Activated naive CD4-positive, alpha-beta T cell treated with anti-CD3 and anti-CD28 coated beads for 36 hours (primary cell): ENCODE measurements at regions of chr14 and their contacts with region 1.

Region 1: DNA sequence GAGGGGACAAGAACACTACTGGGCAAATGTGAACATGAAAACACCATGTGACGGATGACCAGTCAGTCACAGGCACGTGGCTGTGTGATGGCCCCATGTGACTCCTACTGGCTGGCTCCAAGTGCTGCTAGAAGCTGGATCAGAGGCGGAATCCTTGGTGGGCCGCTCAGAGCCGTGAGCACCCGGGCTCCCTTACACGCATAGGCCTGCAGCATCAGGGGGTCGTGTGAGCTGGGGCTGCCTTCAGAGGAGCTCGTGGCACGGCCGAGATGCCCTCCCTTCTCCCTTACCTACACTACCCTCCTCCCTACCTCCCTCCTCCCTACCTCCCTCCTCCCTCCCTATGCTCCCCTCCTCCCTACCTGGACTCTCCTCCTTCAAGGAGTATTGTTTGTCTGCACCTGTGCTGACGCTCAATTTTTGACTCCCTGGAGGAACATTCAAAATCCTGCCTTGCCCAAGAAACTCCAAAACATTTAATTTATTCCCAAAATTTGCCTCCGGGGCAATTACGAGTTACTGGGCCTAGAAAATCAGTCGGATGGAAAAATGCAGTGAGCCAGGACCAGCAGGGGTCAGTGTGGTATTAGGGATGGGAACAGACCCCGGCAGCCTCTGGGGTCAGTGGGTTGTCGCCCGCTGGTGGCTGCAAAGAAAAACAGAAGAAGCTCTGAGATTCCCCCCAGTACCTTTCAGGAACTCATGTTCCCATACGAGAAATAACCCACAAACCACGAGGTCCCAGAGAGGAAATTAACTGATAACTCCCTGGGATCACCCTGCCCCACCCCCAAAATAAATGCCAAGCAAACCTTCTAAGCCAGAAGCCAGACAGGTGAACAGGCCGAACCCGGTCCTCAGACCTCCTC is 61.2 kb downstream of the C14orf132 start:
- DNase-seq: peak; percentile 86
- H3K4me3 Mint-ChIP-seq: no peak overlapping the region
- H3K27ac Mint-ChIP-seq: no peak overlapping the region
- H3K4me1 Mint-ChIP-seq: peaks cover 8% of the 10 kb centered on the region
- H3K27me3 Mint-ChIP-seq: no peaks in the 10 kb centered on the region

Region 2: GRCh38 chr14:95561001-95561412 is 539.4 kb before region 1 on chr14:
- CTCF ChIA-PET with region 1: no interaction called
- intact Hi-C with region 1: loop called (anchors 2 kb)
- DNase-seq: peak; percentile 96
- H3K4me3 Mint-ChIP-seq: no peak overlapping the region
- H3K27ac Mint-ChIP-seq: no peak overlapping the region
- H3K4me1 Mint-ChIP-seq: no peaks in the 10 kb centered on the region
- H3K27me3 Mint-ChIP-seq: peaks cover 2% of the 10 kb centered on the region

Region 3: GRCh38 chr14:95993768-95994592 is 106.4 kb before region 1 on chr14:
- CTCF ChIA-PET with region 1: interaction called, 9 read pairs
- intact Hi-C with region 1: loop called (anchors 2 kb)
- DNase-seq: peak; percentile 52
- H3K4me3 Mint-ChIP-seq: no peak overlapping the region
- H3K27ac Mint-ChIP-seq: no peak overlapping the region
- H3K4me1 Mint-ChIP-seq: no peaks in the 10 kb centered on the region
- H3K27me3 Mint-ChIP-seq: peaks cover 37% of the 10 kb centered on the region

Region 4: GRCh38 chr14:96056509-96057422 is 43.6 kb before region 1 on chr14:
- CTCF ChIA-PET with region 1: interaction called, 5 read pairs
- intact Hi-C with region 1: loop called (anchors 2 kb)
- DNase-seq: peak; percentile 24
- H3K4me3 Mint-ChIP-seq: no peak overlapping the region
- H3K27ac Mint-ChIP-seq: no peak overlapping the region
- H3K4me1 Mint-ChIP-seq: no peaks in the 10 kb centered on the region
- H3K27me3 Mint-ChIP-seq: no peaks in the 10 kb centered on the region

Region 5: DNA sequence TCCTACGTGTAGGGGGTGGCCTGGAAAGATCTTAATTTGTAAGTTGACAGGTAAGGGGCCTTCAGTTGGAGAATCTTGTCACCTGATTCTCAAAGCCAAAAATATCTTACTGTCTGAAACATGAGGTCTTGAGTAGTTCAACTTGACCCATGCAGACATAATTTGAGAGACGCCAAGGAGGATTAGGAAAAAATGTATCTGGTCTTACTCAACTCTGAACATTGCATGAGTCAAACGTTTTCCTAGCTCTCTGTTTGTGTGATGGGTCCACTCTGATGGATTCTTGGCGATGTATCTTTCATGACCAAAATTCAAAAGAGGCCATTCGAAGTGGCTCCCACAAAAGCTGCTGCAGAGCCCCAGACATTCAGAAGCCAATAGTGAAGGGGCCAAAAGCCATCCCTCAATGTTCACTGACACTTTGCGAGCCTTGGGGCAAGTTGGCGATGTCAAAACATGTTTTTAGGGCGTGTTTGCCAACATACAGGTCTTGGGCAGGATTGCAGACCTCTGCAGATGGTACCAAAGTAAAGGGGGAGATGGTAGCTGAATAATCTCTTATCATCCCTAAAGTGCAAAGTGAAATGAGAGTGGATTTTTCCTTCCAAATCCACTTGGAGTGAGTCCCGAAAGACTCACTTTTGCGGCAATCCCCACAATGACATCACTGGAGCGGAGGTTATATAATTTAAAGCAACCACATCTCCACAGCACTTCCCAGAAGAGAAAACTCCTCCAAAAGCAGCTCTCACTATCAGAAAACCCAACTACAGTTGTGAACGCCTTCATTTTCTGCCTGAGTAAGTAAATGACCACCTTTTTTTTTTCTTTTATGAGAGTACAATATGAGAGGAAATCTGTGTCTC is 155.3 kb after region 1 on chr14 and contains the start of gene BDKRB1:
- CTCF ChIA-PET with region 1: interaction called, 3 read pairs
- intact Hi-C with region 1: loop called (anchors 5 kb)
- DNase-seq: no peak
- H3K4me3 Mint-ChIP-seq: no peak within 1 kb of the TSS
- H3K27ac Mint-ChIP-seq: no peak within 1 kb of the TSS
- H3K4me1 Mint-ChIP-seq: no peaks in the 10 kb centered on the region
- H3K27me3 Mint-ChIP-seq: peaks cover 9% of the 10 kb centered on the region
- total RNA-seq, gene BDKRB1: not detected

Region 6: GRCh38 chr14:96275177-96276112 is 175.1 kb after region 1 on chr14:
- CTCF ChIA-PET with region 1: interaction called, 120 read pairs
- intact Hi-C with region 1: loop called (anchors 1 kb)
- DNase-seq: peak; percentile 83
- H3K4me3 Mint-ChIP-seq: no peak overlapping the region
- H3K27ac Mint-ChIP-seq: no peak overlapping the region
- H3K4me1 Mint-ChIP-seq: peaks cover 2% of the 10 kb centered on the region
- H3K27me3 Mint-ChIP-seq: no peaks in the 10 kb centered on the region

Region 7: DNA sequence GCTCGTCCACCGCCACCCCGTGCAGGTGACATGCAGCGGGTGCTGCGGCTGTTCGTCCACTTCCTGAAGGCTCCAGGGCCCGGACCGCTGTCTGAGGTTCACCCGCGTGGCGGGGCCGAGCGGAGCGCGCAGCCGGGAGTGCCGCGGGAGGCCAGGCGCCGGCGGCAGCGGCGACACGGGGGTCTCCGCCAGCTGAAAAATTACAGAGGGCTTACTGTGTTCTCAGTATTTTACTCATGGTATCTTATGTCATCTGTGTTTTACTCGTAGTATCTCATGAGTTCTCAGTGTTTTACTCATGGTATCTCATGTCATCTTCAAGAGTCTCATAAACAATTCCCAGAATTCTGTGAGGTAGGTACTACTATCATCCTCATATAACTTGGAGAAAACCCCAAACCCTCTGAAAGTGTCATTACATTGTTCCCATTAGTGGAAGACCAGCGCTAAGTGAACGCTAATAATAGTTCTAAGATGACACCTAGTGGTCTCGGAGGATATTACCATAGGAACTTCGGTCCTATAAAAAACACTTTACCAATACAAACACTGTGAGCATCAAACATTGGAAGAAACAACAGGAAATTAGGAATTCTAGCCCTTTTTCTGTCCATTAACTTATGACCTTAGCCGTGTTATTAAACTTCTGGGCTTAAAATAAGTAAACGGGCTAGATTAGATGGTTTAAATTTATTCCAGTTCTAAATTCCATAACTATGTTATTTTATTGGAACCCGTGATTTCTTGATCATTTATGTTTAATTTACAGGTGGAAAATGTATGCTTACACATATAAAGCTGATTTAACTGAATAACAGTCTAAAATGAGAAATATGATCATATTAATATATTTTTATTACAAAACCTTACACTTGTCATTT is 324.0 kb after region 1 on chr14:
- CTCF ChIA-PET with region 1: interaction called, 4 read pairs
- intact Hi-C with region 1: loop called (anchors 1 kb)
- DNase-seq: peak; percentile 33
- H3K4me3 Mint-ChIP-seq: peak overlapping the region; percentile 64
- H3K27ac Mint-ChIP-seq: no peak overlapping the region
- H3K4me1 Mint-ChIP-seq: peaks cover 2% of the 10 kb centered on the region
- H3K27me3 Mint-ChIP-seq: peaks cover 4% of the 10 kb centered on the region